Right ventricle myocardium inferior (tissue), 1 donor: ENCODE measurements at regions of chr20 and their contacts with region 1.

Region 1: DNA sequence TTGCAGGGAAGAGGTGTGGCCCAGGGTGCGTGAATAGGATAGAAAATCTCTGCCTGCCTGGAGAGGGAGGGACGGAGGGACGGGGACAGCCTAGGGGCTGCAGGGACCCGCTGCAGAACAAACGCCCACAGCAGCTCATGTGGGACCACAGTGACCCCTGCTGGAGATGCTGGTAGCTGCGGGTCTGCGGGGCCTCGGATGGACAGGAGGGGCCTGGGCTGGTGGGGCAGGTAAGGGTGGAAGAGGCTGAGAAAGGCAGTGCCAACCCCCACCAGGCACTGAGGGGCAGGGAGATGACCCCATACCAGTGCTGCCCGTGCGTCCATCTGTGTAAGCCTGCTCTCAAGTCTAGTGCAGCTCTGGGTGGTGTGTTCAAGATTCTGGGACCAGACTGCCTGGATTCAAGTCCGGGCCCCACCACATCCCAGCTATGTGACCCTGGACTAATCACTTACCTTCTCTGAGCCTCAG is 39.4 kb downstream of the KIAA1755 start:
- DNase-seq: peak; percentile 81
- ATAC-seq: peak; percentile 60

Region 2: GRCh38 chr20:37564388-37565133 is 656.6 kb before region 1 on chr20:
- intact Hi-C with region 1: loop called (anchors 1 kb)
- DNase-seq: peak; percentile 79
- ATAC-seq: peak; percentile 76

Region 3: DNA sequence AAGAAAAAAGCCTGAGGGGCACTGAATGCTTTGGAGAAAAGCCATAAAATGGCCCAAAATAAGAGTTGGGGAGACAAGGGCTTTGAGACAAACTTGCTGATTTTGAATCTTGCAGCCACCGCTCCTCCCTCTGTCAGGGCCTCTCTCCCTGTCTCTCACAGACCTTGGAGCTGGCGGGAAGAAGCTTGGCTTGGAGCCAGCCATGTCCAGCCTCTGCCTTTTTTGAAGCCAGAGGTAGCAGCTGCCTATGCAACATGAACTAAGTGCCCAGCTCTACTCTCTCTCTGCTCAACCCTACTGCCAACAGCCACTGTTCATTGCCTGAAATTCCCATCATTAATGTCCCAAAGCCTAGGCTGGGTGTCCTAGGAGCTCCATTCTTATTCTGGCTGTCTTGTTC is 591.0 kb before region 1 on chr20:
- intact Hi-C with region 1: loop called (anchors 10 kb)
- DNase-seq: no peak
- ATAC-seq: no peak

Region 4: GRCh38 chr20:37880726-37881591 is 340.2 kb before region 1 on chr20:
- intact Hi-C with region 1: no loop called
- DNase-seq: peak; percentile 85
- ATAC-seq: peak; percentile 91

Region 5: GRCh38 chr20:38057351-38057972 is 163.7 kb before region 1 on chr20:
- intact Hi-C with region 1: loop called (anchors 1 kb)
- DNase-seq: peak; percentile 95
- ATAC-seq: peak; percentile 90

Region 6: GRCh38 chr20:38073307-38074071 is 147.7 kb before region 1 on chr20:
- intact Hi-C with region 1: no loop called
- DNase-seq: no peak
- ATAC-seq: peak; percentile 87

Region 7: DNA sequence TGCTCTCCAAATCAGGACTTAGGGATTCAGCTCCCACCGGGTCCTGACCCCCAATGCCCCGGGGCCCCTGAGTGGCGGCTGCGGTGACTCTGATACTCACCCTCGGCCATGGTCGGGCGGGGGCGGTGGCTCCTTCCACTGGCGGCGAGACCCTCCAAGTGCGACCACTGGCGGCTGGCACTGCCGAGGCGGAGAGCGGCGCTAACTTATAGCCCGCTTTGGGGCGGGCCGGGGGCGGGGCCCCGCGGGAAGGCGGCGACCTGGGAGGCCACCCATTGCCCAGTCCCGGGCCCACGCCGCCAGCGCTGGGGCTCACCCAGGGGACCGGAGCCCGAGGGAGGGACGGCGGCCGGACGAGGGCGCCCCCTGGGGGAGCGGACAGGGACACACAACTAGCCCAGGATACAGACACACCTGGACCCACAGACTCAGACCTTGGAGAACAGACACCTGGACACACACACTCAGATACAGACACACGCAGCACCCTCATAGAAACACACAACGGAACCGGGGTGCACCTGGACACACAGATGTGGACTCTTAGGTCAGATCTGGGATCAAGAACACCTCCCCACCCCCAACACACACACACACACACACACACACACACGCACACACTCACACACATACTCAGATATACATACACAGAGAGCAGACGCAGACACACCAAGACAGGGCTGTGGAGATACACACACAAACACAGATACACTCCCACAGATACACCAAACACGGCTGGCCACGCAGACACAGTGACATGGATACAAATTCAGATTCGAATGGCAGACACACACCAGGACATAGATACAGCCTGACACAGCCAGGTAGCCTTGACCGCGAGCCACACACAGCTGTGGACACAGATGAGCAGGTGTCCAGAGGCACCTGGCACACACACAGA is 55.8 kb before region 1 on chr20 and contains the start of gene TGM2:
- intact Hi-C with region 1: loop called (anchors 1 kb)
- DNase-seq: peak; percentile 93
- ATAC-seq: peak; percentile 83
- total RNA-seq, gene TGM2: 581 TPM

Region 8: GRCh38 chr20:38196592-38196991 is 24.6 kb before region 1 on chr20:
- intact Hi-C with region 1: no loop called
- DNase-seq: peak; percentile 92
- ATAC-seq: peak; percentile 94

Region 9: GRCh38 chr20:38406476-38406875 is 185.3 kb after region 1 on chr20:
- intact Hi-C with region 1: loop called (anchors 10 kb)
- DNase-seq: no peak
- ATAC-seq: no peak